Sigmoid colon (tissue), 7 donors: ENCODE measurements at regions of chr1 and their contacts with region 1.

Region 1: GRCh38 chr1:53889304-53890298 is at the start of gene YIPF1:
- DNase-seq: peak; percentile 95
- H3K4me3 ChIP-seq: peak within 1 kb of the TSS; percentile 84 to 95 (median 90)
- H3K27ac ChIP-seq: peak within 1 kb of the TSS; percentile 79 to 89 (median 82)
- H3K4me1 ChIP-seq: peaks cover 0 to 21% (median 18%) of the 10 kb centered on the region in 4 donors
- H3K27me3 ChIP-seq: no peaks in the 10 kb centered on the region
- CTCF ChIP-seq: no peak
- EP300 ChIP-seq: peak in 1 of 4 donors; percentile 31
- POLR2A ChIP-seq: no peak
- total RNA-seq, gene YIPF1: 13.3 to 23.3 (median 18.8) TPM

Region 2: DNA sequence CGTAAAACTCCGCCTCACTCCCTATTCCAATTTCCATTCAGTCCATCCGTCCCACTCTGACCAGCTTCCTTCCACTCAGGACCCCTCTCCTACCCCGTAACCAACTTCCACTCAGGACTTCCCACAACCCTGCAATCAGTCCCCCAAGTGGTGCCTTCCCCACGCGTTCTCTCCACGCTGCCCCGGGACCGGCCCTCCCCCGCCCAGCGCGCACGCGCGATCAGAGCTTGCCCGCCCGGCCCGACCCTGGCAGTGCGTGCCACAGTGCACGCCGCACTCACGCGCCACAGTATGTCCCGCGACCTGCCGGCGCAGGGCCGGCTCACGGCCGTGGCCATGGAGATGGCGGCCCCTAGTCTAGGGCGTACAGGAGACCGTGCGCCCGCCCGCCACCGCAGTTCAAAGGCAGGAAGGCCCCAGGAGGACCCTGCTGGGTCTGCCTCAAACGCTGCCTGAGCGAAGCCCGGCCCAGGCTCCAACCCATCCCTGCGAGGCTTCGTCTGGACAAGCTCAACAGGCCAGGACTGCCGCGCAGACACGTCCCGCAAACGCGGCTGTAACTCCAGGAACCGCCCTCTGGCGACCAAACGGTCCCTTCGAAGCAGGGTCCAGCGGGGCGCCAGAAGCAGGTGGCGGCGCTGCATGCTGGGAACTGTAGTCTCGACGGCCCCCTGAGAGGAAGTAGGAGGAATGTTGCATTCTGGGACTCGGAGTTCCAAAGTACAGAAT is 51.5 kb before region 1 on chr1 and contains the start of gene NDC1:
- intact Hi-C with region 1: loop called (anchors 5 kb)
- DNase-seq: peak; percentile 93
- H3K4me3 ChIP-seq: peak within 1 kb of the TSS; percentile 80 to 93 (median 88)
- H3K27ac ChIP-seq: peak within 1 kb of the TSS; percentile 91 to 96 (median 93)
- H3K4me1 ChIP-seq: peaks cover 0 to 18% (median 11%) of the 10 kb centered on the region in 4 donors
- H3K27me3 ChIP-seq: no peaks in the 10 kb centered on the region
- CTCF ChIP-seq: no peak
- EP300 ChIP-seq: peak in 1 of 4 donors; percentile 19
- POLR2A ChIP-seq: no peak
- total RNA-seq, gene NDC1: 7.6 to 11.4 (median 10.2) TPM